ENCODE measurements at regions of chr22 and their contacts with region 1.

Region 1: GRCh38 chr22:22463855-22464540 is 44.5 kb downstream of the ZNF280B start:
- DNase-seq: peak; percentile 66
- ATAC-seq: peak; percentile 79
- H3K4me3 Mint-ChIP-seq: no peak overlapping the region
- H3K27ac Mint-ChIP-seq: no peak overlapping the region
- H3K4me1 Mint-ChIP-seq: peaks cover 8% of the 10 kb centered on the region; the same call in 1 of the 2 replicates
- H3K27me3 Mint-ChIP-seq: peaks cover 100% of the 10 kb centered on the region
- CTCF ChIP-seq: peak; percentile 77

Region 2: DNA sequence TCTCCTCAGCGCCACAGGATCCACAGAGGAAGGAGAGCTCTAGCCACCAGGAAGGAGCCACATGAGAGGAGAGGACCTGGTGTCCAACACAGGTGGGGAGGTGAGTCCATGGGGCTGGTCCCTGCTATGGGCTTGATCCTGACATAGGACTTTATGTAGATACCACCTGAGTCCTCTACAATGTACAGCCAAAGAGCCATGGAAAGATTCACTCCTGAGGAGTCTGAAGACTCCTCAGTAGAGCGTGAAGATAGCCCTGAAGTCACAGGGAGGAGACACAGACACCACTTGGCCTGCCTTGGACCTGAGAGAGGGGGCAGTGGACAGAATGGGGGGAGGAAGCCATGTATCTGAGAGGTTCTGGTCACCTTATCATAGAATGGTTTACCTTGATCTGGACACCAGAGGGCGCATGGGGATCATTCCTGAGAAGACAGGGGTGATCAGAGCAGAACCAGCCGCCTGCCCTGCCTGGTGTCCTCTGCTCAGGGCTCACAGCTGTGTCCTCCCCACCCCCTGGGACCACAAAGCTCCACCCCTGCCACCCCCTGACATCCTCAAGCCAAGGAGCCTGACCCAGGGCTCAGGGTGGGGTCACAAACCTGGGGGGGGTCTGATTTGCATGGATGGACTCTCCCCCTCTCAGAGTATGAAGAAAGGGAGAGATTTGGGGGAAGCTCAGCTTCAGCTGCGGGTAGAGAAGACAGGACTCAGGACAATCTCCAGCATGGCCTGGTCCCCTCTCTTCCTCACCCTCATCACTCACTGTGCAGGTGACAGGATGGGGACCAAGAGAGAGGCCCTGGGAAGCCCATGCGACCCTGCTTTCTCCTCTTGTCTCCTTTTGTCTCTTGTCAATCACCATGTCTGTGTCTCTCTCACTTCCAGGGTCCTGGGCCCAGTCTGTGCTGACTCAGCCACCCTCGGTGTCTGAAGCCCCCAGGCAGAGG is 32.5 kb before region 1 on chr22:
- CTCF ChIA-PET with region 1: interaction called, 17 read pairs
- POLR2A ChIA-PET with region 1: interaction called, 5 read pairs
- DNase-seq: peak; percentile 79
- ATAC-seq: peak; percentile 98
- H3K4me3 Mint-ChIP-seq: no peak overlapping the region
- H3K27ac Mint-ChIP-seq: no peak overlapping the region
- H3K4me1 Mint-ChIP-seq: 0 out of 2 replicates have a peak, but pooled peaks cover 3% of the 10 kb centered on the region
- H3K27me3 Mint-ChIP-seq: peaks cover 100% of the 10 kb centered on the region
- CTCF ChIP-seq: no peak; the same call in 1 of the 2 replicates

Region 3: GRCh38 chr22:22508274-22509176 is 44.5 kb after region 1 on chr22 and contains the start of gene ZNF280B:
- CTCF ChIA-PET with region 1: interaction called, 17 read pairs
- POLR2A ChIA-PET with region 1: no interaction called
- DNase-seq: peak; percentile 89
- ATAC-seq: peak; percentile 98
- H3K4me3 Mint-ChIP-seq: peak within 1 kb of the TSS; percentile 77
- H3K27ac Mint-ChIP-seq: no peak within 1 kb of the TSS
- H3K4me1 Mint-ChIP-seq: peaks cover 8% of the 10 kb centered on the region
- H3K27me3 Mint-ChIP-seq: peaks cover 69% of the 10 kb centered on the region
- CTCF ChIP-seq: peak; percentile 38; the same call in 1 of the 2 replicates
- total RNA-seq, gene ZNF280B: 5.9 to 7.7 TPM (median 7.0 TPM) in 3 replicates

Region 4: DNA sequence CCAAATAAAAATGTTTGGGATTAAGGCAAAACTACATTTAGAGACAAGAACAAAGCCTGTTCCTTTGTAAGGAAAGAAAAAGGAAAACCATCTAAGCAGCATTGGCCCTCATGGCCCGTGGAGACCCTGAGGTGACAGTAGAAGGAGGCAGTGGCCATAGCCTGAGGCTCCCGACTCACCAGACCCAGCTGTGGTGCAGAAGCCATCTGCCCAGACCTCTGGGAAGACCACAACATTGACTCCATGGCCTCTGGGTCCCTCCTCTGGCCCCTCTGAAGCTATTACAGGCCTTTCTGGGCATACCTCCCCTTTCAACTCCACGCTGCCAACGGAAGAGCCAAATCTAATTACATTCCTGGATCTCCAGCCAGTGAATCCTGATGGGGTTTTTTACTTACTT is 88.6 kb after region 1 on chr22:
- CTCF ChIA-PET with region 1: interaction called, 31 read pairs
- POLR2A ChIA-PET with region 1: no interaction called
- DNase-seq: peak; percentile 50
- ATAC-seq: peak; percentile 95
- H3K4me3 Mint-ChIP-seq: no peak overlapping the region
- H3K27ac Mint-ChIP-seq: no peak overlapping the region
- H3K4me1 Mint-ChIP-seq: no peaks in the 10 kb centered on the region
- H3K27me3 Mint-ChIP-seq: peaks cover 94% of the 10 kb centered on the region
- CTCF ChIP-seq: no peak

Region 5: DNA sequence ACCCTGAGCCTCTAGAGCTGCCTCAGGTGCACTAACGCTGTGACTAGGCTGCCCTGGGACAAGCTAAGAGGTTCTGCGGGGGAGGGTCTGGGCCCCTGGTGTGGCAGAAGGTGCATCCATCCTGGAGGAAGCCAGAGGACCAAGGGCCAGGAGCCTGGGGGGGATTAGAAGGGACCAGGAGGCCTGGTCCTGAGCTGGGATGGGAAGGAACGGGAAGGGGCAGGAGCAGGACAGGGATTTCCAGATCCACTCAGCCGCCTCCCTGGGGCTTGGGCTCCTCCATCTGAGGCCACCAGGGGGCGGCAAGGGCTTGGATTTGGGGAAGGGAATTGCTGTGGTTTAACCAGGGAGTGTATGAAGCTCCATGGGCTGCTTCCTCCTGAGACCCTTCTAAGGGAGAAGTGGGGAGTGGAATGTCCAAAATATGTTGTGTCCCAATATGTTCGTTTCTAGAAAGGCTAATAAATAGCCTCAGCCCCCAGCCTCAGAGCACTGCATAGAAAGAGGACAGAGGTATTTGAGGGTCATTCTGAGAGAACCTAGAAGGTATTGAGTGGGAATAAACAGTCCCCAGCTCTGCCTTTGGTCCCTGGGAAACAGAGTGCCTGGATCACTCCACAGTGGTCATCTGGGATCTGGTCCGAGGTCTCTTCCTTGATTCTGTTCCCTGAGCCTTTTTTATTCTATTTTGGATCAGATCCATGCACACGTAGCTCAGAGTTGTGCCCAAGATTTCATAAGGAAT is 112.4 kb after region 1 on chr22:
- CTCF ChIA-PET with region 1: interaction called, 52 read pairs
- POLR2A ChIA-PET with region 1: no interaction called
- DNase-seq: peak; percentile 84
- ATAC-seq: peak; percentile 96
- H3K4me3 Mint-ChIP-seq: no peak overlapping the region
- H3K27ac Mint-ChIP-seq: no peak overlapping the region
- H3K4me1 Mint-ChIP-seq: no peaks in the 10 kb centered on the region
- H3K27me3 Mint-ChIP-seq: peaks cover 97% of the 10 kb centered on the region
- CTCF ChIP-seq: peak; percentile 72

Region 6: DNA sequence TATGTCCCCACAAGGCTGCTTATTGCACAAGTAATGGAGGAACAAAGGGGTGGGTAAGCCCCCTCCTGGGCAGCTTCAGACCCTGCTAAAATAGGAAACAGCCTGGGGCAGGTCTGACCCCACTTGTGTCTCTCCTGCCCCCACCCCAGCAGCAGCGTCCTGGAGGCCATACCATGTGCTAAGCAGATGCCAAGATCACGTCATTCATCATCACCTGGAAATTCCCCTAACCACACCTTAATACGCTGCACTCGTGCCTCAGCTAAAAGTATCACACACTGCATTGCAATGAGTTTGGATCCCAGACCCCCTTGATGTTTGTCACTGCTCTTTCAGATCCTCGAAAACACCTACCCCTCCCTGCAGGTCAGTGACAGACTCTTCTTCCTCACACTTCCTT is 152.6 kb after region 1 on chr22:
- CTCF ChIA-PET with region 1: interaction called, 12 read pairs
- POLR2A ChIA-PET with region 1: no interaction called
- DNase-seq: no peak
- ATAC-seq: no peak
- H3K4me3 Mint-ChIP-seq: no peak overlapping the region
- H3K27ac Mint-ChIP-seq: no peak overlapping the region
- H3K4me1 Mint-ChIP-seq: peaks cover 6% of the 10 kb centered on the region
- H3K27me3 Mint-ChIP-seq: peaks cover 97% of the 10 kb centered on the region
- CTCF ChIP-seq: no peak

Region 7: GRCh38 chr22:22673099-22673498 is 209.1 kb after region 1 on chr22:
- CTCF ChIA-PET with region 1: no interaction called
- POLR2A ChIA-PET with region 1: no interaction called
- DNase-seq: no peak
- ATAC-seq: no peak
- H3K4me3 Mint-ChIP-seq: no peak overlapping the region
- H3K27ac Mint-ChIP-seq: no peak overlapping the region
- H3K4me1 Mint-ChIP-seq: no peaks in the 10 kb centered on the region
- H3K27me3 Mint-ChIP-seq: peaks cover 100% of the 10 kb centered on the region
- CTCF ChIP-seq: no peak

Region 8: GRCh38 chr22:22710719-22711531 is 246.9 kb after region 1 on chr22:
- CTCF ChIA-PET with region 1: interaction called, 17 read pairs
- POLR2A ChIA-PET with region 1: no interaction called
- DNase-seq: peak; percentile 83
- ATAC-seq: peak; percentile 77
- H3K4me3 Mint-ChIP-seq: no peak overlapping the region
- H3K27ac Mint-ChIP-seq: no peak overlapping the region
- H3K4me1 Mint-ChIP-seq: no peaks in the 10 kb centered on the region
- H3K27me3 Mint-ChIP-seq: peaks cover 99% of the 10 kb centered on the region
- CTCF ChIP-seq: peak; percentile 96

Measured in WTC11 (cell line).